Psoas muscle (tissue), 8 donors: ENCODE measurements at regions of chr6 and their contacts with region 1.

Region 1: DNA sequence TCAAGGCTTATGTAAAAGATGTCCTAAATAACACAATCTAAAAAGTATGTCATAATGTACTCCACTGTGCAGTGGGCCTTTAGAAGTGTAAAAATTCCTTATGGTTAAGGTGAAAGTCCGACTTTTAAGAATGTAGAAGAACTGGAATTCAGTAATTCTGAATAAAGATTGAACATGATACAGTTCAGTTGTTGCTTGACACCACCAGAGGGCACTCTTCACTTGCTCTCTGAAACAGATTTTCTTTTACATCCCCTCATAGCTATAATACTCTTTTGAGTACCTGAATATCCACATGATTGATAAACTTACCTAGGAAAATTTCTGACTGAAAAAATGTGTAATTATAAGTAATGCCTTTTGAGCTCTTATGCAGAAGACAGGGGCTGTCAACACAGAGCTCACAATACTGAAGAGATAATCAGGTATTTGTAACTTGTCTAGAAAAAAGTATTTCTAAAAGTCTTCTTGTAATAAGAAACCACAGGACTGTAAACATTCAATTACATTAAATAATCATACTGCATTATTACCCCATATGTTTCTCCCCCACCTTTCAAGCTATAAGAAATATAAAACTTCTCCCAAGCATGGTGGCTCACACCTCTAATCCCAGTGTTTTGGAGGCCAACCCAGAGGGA is 92.1 kb downstream of the POPDC3 start:
- DNase-seq: no peak
- ATAC-seq: peak; percentile 60 to 84 (median 70)
- H3K4me3 ChIP-seq: no peak overlapping the region
- H3K27ac ChIP-seq: no peak overlapping the region
- H3K4me1 ChIP-seq: peaks cover 8% of the 10 kb centered on the region
- H3K27me3 ChIP-seq: no peaks in the 10 kb centered on the region
- CTCF ChIP-seq: peak; percentile 91

Region 2: GRCh38 chr6:105121981-105122380 is 34.3 kb after region 1 on chr6:
- intact Hi-C with region 1: no loop called
- DNase-seq: no peak
- ATAC-seq: peak in 2 of 4 donors; percentile 24 to 37
- H3K4me3 ChIP-seq: no peak overlapping the region
- H3K27ac ChIP-seq: no peak overlapping the region
- H3K4me1 ChIP-seq: no peaks in the 10 kb centered on the region
- H3K27me3 ChIP-seq: no peaks in the 10 kb centered on the region
- CTCF ChIP-seq: no peak

Region 3: GRCh38 chr6:105402939-105403935 is 315.5 kb after region 1 on chr6 and contains the start of gene PREP:
- intact Hi-C with region 1: loop called (anchors 2 to 5 kb)
- DNase-seq: peak; percentile 88 to 93
- ATAC-seq: peak; percentile 93 to 96 (median 94)
- H3K4me3 ChIP-seq: peak within 1 kb of the TSS; percentile 97
- H3K27ac ChIP-seq: peak within 1 kb of the TSS; percentile 95
- H3K4me1 ChIP-seq: peaks cover 41% of the 10 kb centered on the region
- H3K27me3 ChIP-seq: no peaks in the 10 kb centered on the region
- CTCF ChIP-seq: peak; percentile 78
- total RNA-seq, gene PREP: 44.7 to 67.0 (median 55.0) TPM

Region 4: DNA sequence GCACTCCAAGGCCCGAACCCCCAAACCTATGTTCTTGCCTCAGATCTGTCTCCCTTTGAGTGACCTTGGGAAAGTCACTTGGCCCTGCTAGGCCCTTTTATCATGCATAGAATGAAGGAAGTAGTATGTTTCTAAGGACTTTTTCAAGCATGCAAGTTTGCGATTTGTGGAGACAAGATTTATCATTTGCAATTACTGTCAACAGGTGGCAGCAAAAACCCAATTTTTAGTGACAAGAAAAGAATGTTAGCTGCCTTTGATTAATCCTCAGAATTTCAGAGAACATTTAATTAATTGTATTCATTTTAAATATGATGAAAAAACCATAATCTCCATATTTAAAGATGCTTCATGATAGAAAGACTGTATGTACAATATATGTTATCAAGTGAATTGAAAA is 343.5 kb after region 1 on chr6:
- intact Hi-C with region 1: loop called (anchors 5 kb)
- DNase-seq: no peak
- ATAC-seq: no peak
- H3K4me3 ChIP-seq: no peak overlapping the region
- H3K27ac ChIP-seq: no peak overlapping the region
- H3K4me1 ChIP-seq: no peaks in the 10 kb centered on the region
- H3K27me3 ChIP-seq: peaks cover 0 to 3% (median 0%) of the 10 kb centered on the region in 3 donors
- CTCF ChIP-seq: peak; percentile 51